GM12878 (cell line): ENCODE measurements at regions of chr5 and their contacts with region 1.

Region 1: DNA sequence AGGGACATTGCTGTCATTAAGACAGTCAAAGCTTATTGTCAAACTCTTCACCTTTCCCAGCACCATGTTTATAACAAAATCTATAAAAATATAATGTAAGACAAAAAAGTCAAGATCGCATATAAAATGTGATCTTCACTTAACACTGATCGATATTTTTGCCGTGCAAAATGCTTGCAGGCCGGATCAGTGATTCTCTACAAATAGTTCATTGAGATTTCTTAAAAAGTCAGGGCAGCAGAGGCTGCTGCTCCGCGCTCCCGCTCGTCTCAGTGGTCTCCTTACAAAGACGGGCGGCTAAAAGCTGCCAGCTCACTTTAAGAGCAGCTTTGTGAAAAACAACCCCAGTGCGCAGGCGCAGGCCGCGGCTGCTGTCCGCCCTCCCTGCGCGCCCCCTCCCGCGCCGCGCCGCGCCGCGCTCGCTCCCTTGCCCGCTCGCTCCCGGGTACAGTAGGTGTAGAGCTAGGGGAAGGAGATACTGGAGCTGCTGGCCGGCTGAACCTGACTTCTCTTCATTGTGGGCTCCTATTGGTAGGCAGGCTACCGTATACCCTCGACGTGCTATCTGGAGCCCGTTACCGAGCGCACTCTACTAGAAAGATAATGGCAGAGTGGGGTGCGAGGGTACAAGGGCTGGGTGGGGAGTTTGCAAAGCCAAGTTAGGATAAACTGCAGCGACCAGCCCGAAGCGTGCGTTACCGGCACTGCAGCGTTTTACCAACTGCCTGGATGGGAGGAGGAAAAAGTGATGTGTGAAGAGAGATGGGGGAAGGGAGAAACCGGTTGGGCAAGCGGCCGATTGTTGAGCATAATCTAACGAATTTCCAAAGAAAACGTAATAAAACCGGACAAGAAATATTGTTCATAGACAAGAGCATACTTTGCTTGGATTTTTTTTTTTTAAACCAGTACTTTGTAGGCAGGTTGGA is at the start of gene ARRDC3:
- DNase-seq: peak; percentile 82
- ATAC-seq: peak; percentile 69
- H3K4me3 ChIP-seq: peak within 1 kb of the TSS; percentile 95
- H3K27ac ChIP-seq: peak within 1 kb of the TSS; percentile 100
- H3K4me1 ChIP-seq: peaks cover 8% of the 10 kb centered on the region; the same call in 1 of the 2 replicates
- H3K27me3 ChIP-seq: no peaks in the 10 kb centered on the region
- CTCF ChIP-seq: no peak
- EP300 ChIP-seq: no peak
- POLR2A ChIP-seq: peak; percentile 98
- RAD21 ChIP-seq: no peak
- polyA plus RNA-seq, gene ARRDC3: 2.3 to 7.0 TPM

Region 2: GRCh38 chr5:90802474-90803317 is 580.6 kb before region 1 on chr5:
- CTCF ChIA-PET with region 1: interaction called, 5 read pairs
- POLR2A ChIA-PET with region 1: no interaction called
- RAD21 ChIA-PET with region 1: interaction called, 12 read pairs
- SMC1A ChIA-PET with region 1: interaction called, 8 read pairs
- in situ Hi-C with region 1: no loop called
- intact Hi-C with region 1: no loop called
- DNase-seq: no peak
- ATAC-seq: peak; percentile 85
- H3K4me3 ChIP-seq: no peak overlapping the region
- H3K27ac ChIP-seq: no peak overlapping the region
- H3K4me1 ChIP-seq: no peaks in the 10 kb centered on the region
- H3K27me3 ChIP-seq: no peaks in the 10 kb centered on the region
- CTCF ChIP-seq: peak; percentile 62 to 75 (median 74)
- EP300 ChIP-seq: no peak
- POLR2A ChIP-seq: no peak
- RAD21 ChIP-seq: peak; percentile 53

Region 3: DNA sequence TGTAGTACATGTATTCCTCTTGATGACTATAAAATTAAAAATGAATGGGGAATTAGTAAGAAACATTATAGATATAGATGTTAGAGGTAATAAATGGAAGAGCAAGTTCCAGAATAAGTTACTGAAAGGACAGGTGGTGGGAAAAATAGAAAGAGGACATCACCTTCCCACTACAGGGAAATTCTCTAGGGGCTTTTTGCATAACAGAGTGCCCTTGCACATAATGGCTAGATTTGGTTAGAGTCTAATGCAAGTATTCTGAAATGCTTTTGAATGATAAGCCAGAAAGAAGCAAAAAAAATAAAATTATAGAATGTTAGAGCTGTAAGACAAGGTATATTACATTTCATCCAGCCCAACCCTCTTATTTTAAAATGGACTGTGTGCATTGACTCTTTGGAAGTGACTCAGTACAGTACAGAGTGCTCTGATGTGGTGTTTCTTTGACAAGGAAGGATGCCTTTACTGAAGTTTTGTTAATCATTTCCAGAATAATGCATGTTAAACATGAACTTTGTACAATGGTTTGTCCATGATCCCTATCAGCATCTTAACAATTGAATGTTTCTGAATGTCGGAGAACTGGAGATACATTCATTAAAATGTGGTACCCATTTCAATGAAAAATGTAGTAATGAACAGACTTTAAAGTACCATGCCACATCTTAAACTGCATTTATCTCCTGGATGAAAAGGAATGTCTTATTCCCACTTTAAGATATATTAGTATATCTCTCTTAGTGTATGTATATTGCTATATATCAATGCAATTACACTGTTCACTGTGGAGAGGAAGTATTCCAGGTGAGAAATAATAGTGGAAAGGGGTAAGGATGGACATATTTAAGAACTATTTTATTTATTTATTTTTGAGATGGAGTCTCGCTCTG is 433.6 kb before region 1 on chr5:
- CTCF ChIA-PET with region 1: no interaction called
- POLR2A ChIA-PET with region 1: no interaction called
- RAD21 ChIA-PET with region 1: interaction called, 3 read pairs
- SMC1A ChIA-PET with region 1: interaction called, 3 read pairs
- in situ Hi-C with region 1: no loop called
- intact Hi-C with region 1: loop called (anchors 5 kb)
- DNase-seq: no peak
- ATAC-seq: peak; percentile 96
- H3K4me3 ChIP-seq: no peak overlapping the region
- H3K27ac ChIP-seq: no peak overlapping the region
- H3K4me1 ChIP-seq: no peaks in the 10 kb centered on the region
- H3K27me3 ChIP-seq: no peaks in the 10 kb centered on the region
- CTCF ChIP-seq: no peak
- EP300 ChIP-seq: peak in 1 of 2 experiments; percentile 28; a peak in 1 of 4 replicates
- POLR2A ChIP-seq: no peak
- RAD21 ChIP-seq: no peak

Region 4: DNA sequence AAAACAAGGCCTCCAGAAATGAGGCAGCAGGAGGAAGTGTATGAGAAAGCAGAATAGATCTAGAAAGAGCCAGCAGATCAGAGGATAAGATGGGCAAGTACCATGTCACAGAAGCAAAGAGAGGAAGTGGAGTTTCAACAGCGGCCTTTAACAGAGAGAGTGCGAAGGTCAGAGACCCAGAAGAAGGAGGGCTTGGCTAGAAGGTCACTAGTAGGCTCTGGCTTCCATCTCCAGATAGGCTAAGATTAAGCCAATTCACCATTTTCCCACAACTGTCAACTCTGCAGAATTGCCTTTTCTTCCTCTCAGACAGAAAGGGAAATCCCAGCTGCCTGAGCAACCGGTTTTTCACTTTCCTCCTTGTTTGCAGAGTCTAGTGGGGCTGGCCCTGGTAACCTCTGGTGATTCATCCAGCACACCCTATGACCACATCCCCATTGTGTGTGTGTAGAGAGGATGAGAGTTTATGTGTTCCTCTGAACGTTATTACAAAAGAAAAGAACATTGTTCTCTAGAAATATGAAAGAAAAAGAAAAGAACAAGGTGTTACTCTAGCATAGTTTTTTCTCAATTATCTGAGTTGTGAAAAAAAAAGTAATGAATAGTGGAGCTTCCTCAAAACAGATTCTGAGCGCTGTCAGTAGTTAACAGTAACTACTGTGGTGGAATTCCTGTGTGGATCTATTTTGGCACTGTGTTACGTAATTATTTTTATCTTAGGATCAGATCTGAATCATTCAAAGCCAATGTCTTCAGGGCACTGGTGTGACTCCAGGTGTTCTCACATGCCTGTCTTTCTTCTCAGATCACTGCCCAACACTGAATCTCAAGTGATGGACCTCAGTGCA is 220.5 kb before region 1 on chr5:
- CTCF ChIA-PET with region 1: interaction called, 5 read pairs
- POLR2A ChIA-PET with region 1: interaction called, 13 read pairs
- RAD21 ChIA-PET with region 1: interaction called, 3 read pairs
- SMC1A ChIA-PET with region 1: interaction called, 4 read pairs
- in situ Hi-C with region 1: no loop called
- intact Hi-C with region 1: loop called (anchors 2 kb)
- DNase-seq: peak; percentile 78
- ATAC-seq: peak; percentile 99
- H3K4me3 ChIP-seq: no peak overlapping the region
- H3K27ac ChIP-seq: peak overlapping the region; percentile 77
- H3K4me1 ChIP-seq: peaks cover 22% of the 10 kb centered on the region
- H3K27me3 ChIP-seq: no peaks in the 10 kb centered on the region
- CTCF ChIP-seq: no peak
- EP300 ChIP-seq: peak in 1 of 2 experiments; percentile 87; a peak in 3 of 4 replicates
- POLR2A ChIP-seq: no peak
- RAD21 ChIP-seq: no peak

Region 5: DNA sequence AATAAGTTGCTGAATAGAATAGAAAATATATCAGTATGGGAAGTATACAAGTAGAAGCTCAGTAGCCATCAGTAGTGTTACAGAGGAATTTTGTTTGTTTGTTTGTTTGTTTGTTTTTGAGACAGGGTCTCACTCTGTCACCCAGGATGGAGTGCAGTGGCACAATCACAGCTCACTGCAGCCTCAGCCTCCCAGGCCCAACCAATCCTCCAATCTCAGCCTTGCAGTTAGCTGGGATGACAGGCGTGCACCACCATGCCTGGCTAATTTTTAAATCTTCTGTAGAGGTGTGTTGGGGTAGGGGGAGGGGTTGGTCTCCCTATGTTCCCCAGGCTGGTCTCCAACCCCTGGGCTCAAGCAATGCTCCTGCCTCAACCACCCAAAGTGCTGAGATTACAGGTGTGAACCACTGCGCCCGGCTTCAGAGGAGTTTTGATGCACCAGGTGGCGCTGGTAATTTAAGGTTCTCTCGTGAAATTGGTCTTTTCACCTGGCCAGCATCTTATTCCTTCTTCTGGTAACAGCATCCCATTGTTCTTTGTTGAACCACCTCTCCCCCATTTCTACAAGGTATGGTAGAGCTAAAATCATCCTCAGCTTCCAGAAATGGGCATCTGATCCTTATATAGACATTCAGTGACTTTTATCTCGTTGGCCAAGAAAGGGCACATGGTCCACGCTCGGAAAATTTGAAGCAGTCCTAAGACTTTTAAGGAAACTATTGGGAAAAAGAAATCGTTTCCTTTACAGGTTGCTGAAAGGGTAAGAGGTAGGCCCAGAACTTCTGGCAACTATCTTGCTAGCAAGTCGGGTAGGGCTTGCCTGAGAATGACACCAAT is 157.2 kb before region 1 on chr5:
- CTCF ChIA-PET with region 1: interaction called, 166 read pairs
- POLR2A ChIA-PET with region 1: interaction called, 8 read pairs
- RAD21 ChIA-PET with region 1: interaction called, 91 read pairs
- SMC1A ChIA-PET with region 1: interaction called, 132 read pairs
- in situ Hi-C with region 1: loop called (anchors 5 kb)
- intact Hi-C with region 1: loop called (anchors 1 kb)
- DNase-seq: peak; percentile 8
- ATAC-seq: peak; percentile 84
- H3K4me3 ChIP-seq: no peak overlapping the region
- H3K27ac ChIP-seq: no peak overlapping the region
- H3K4me1 ChIP-seq: no peaks in the 10 kb centered on the region
- H3K27me3 ChIP-seq: no peaks in the 10 kb centered on the region; a peak in 1 of 4 replicates
- CTCF ChIP-seq: peak; percentile 53 to 71 (median 58); a peak in 5 of 6 replicates
- EP300 ChIP-seq: no peak
- POLR2A ChIP-seq: no peak
- RAD21 ChIP-seq: peak; percentile 84

Region 6: GRCh38 chr5:91280362-91281269 is 102.7 kb before region 1 on chr5:
- CTCF ChIA-PET with region 1: interaction called, 33 read pairs
- POLR2A ChIA-PET with region 1: interaction called, 31 read pairs
- RAD21 ChIA-PET with region 1: interaction called, 34 read pairs
- SMC1A ChIA-PET with region 1: interaction called, 15 read pairs
- in situ Hi-C with region 1: loop called (anchors 5 kb)
- intact Hi-C with region 1: loop called (anchors 2 kb)
- DNase-seq: peak; percentile 65
- ATAC-seq: peak; percentile 97
- H3K4me3 ChIP-seq: peak overlapping the region; percentile 63
- H3K27ac ChIP-seq: peak overlapping the region; percentile 49
- H3K4me1 ChIP-seq: peaks cover 15% of the 10 kb centered on the region
- H3K27me3 ChIP-seq: no peaks in the 10 kb centered on the region; a peak in 1 of 4 replicates
- CTCF ChIP-seq: no peak
- EP300 ChIP-seq: peak; percentile 17 to 25; a peak in 2 of 4 replicates
- POLR2A ChIP-seq: peak; percentile 65
- RAD21 ChIP-seq: no peak

Region 7: DNA sequence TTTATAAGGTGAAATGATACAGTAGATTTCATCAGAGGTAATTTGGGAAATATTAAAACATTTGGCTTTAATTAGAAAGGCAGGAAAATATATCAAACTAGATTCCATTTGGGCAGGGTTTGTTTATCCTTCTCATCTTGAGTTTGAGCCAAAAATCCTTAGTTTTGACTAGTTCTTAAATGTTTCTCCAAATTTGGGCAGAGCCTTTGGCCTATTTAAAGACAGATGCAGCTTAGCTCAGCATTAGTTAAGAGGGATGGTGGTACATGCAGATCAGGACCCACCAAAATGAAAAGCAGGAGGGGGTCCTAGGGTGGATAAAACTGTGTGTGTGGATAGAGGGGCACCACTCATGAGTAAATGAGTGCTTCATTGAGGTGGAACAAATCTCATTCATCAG is 20.1 kb after region 1 on chr5:
- CTCF ChIA-PET with region 1: interaction called, 17 read pairs
- POLR2A ChIA-PET with region 1: interaction called, 4 read pairs
- RAD21 ChIA-PET with region 1: interaction called, 3 read pairs
- SMC1A ChIA-PET with region 1: interaction called, 20 read pairs
- in situ Hi-C with region 1: no loop called
- intact Hi-C with region 1: no loop called
- DNase-seq: no peak
- ATAC-seq: no peak
- H3K4me3 ChIP-seq: no peak overlapping the region
- H3K27ac ChIP-seq: no peak overlapping the region
- H3K4me1 ChIP-seq: no peaks in the 10 kb centered on the region
- H3K27me3 ChIP-seq: no peaks in the 10 kb centered on the region
- CTCF ChIP-seq: no peak
- EP300 ChIP-seq: no peak
- POLR2A ChIP-seq: no peak
- RAD21 ChIP-seq: no peak